ENCODE measurements at regions of chr17 and their contacts with region 1.

Region 1: GRCh38 chr17:4304417-4305027 is 40.7 kb upstream of the ANKFY1 start:
- DNase-seq: peak; percentile 69
- H3K4me3 ChIP-seq: no peak overlapping the region
- H3K27ac ChIP-seq: no peak overlapping the region
- H3K4me1 ChIP-seq: no peaks in the 10 kb centered on the region
- H3K27me3 ChIP-seq: no peaks in the 10 kb centered on the region
- CTCF ChIP-seq: peak; percentile 72

Region 2: DNA sequence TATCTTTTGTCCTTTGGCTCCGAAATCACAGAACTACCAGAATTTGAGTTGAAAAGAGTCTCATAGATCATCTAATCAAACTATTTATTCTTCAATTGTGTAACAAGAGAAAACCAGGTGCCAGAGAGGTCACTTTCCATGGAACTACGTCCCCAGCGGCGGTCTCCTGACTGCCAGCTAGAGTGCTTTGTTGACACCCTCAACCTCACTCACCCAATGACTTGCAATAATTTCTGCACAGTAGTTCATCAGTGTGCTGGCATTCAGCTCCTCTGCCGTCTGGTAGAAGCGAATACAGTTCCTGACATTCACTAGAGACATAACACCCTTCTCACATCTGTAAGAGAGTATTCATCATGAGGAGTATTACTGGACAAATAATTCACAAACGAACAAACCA is 94.9 kb before region 1 on chr17:
- intact Hi-C with region 1: loop called (anchors 5 kb)
- DNase-seq: no peak
- H3K4me3 ChIP-seq: no peak overlapping the region
- H3K27ac ChIP-seq: no peak overlapping the region
- H3K4me1 ChIP-seq: no peaks in the 10 kb centered on the region
- H3K27me3 ChIP-seq: no peaks in the 10 kb centered on the region
- CTCF ChIP-seq: no peak

Region 3: GRCh38 chr17:4256952-4257351 is 47.6 kb before region 1 on chr17:
- intact Hi-C with region 1: no loop called
- DNase-seq: no peak
- H3K4me3 ChIP-seq: no peak overlapping the region
- H3K27ac ChIP-seq: no peak overlapping the region
- H3K4me1 ChIP-seq: no peaks in the 10 kb centered on the region
- H3K27me3 ChIP-seq: no peaks in the 10 kb centered on the region
- CTCF ChIP-seq: no peak

Region 4: GRCh38 chr17:4381690-4382671 is 77.5 kb after region 1 on chr17:
- intact Hi-C with region 1: no loop called
- DNase-seq: no peak
- H3K4me3 ChIP-seq: no peak overlapping the region
- H3K27ac ChIP-seq: no peak overlapping the region
- H3K4me1 ChIP-seq: no peaks in the 10 kb centered on the region
- H3K27me3 ChIP-seq: no peaks in the 10 kb centered on the region
- CTCF ChIP-seq: no peak

Region 5: DNA sequence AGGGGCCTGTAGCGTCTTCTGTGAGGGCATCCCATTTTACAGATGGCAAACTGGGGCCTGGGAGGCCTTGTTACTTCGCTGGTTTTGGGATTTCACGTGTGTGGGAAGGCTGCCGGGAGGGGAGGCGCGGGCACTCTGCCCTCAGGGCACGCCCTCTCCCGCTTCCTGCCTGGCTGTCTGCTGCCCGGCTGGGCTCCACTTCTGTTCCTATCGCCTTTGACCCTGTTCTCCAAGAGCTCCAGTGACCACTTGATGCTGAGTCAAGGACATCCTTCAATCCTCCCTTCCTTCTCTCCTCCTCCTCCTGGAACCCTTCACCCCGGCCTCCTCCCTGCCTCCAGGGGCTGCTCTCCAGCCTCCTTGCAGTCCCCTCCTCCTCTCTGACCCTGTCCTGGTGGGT is 145.2 kb after region 1 on chr17:
- intact Hi-C with region 1: no loop called
- DNase-seq: peak; percentile 45
- H3K4me3 ChIP-seq: no peak overlapping the region
- H3K27ac ChIP-seq: no peak overlapping the region
- H3K4me1 ChIP-seq: peaks cover 1% of the 10 kb centered on the region
- H3K27me3 ChIP-seq: no peaks in the 10 kb centered on the region
- CTCF ChIP-seq: no peak